ENCODE measurements at regions of chr9 and their contacts with region 1.

Region 1: GRCh38 chr9:131096269-131097125 is at the start of gene AIF1L:
- DNase-seq: peak; percentile 51
- H3K4me3 ChIP-seq: peak within 1 kb of the TSS in 2 of 3 experiments; percentile 46 to 61
- H3K27ac ChIP-seq: no peak within 1 kb of the TSS
- H3K4me1 ChIP-seq: peaks cover 5% of the 10 kb centered on the region
- H3K27me3 ChIP-seq: peaks cover 8 to 14% of the 10 kb centered on the region in 2 experiments
- CTCF ChIP-seq: peak in 1 of 2 donors; percentile 45
- POLR2A ChIP-seq: no peak
- total RNA-seq, gene AIF1L: 35.3 and 39.7 TPM in 2 replicates

Region 2: GRCh38 chr9:131111186-131111853 is 14.8 kb after region 1 on chr9:
- CTCF ChIA-PET with region 1: interaction called, 15 read pairs
- POLR2A ChIA-PET with region 1: no interaction called
- dilution Hi-C with region 1: no loop called
- intact Hi-C with region 1: no loop called
- DNase-seq: no peak
- H3K4me3 ChIP-seq: no peak overlapping the region
- H3K27ac ChIP-seq: no peak overlapping the region
- H3K4me1 ChIP-seq: peaks cover 10% of the 10 kb centered on the region
- H3K27me3 ChIP-seq: no peaks in the 10 kb centered on the region
- CTCF ChIP-seq: no peak
- POLR2A ChIP-seq: no peak

Region 3: DNA sequence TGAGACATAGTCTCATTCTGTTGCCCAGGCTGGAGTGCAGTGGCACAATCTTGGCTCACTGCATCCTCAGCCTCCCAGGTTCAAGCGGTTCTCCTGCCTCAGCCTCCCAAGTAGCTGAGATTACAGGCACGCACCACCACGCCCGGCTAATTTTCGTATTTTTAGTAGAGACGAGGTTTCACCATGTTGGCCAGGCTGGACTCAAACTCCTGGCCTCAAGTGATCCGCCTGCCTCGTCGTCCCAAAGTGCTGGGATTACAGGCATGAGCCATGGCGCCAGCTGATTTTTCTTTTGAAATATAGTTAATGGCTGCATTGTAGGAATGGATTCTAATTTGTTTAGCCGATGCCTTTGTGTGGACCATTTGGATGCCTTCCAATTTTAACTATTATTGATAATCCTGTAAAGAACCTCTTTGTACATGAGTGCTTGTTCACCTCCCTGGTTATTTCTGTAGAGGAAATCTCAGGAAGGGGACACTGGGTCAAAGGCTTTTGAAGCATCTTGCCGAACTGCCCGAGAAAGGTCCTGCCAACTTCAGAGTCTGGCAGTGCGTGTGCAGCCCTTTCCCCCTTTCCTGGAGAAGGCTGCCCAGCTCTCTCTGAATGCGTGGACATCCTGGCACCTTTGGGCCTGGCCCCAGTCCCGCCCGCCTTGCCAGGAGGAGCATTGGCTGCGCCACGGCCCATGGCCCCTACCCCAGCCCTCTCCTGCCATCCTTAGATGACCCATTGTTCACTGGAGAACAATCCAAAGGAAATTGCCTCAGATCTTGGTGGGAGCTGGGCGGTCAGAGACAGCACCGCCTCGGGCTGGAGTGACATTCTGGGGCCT is 20.0 kb after region 1 on chr9:
- CTCF ChIA-PET with region 1: interaction called, 15 read pairs
- POLR2A ChIA-PET with region 1: interaction called, 5 read pairs
- dilution Hi-C with region 1: no loop called
- intact Hi-C with region 1: loop called (anchors 1 kb)
- DNase-seq: no peak
- H3K4me3 ChIP-seq: peak overlapping the region in 1 of 3 experiments; percentile 22
- H3K27ac ChIP-seq: peak overlapping the region; percentile 96
- H3K4me1 ChIP-seq: peaks cover 27% of the 10 kb centered on the region
- H3K27me3 ChIP-seq: no peaks in the 10 kb centered on the region
- CTCF ChIP-seq: no peak
- POLR2A ChIP-seq: no peak

Region 4: GRCh38 chr9:131125128-131126058 is 28.9 kb after region 1 on chr9 and contains the start of gene NUP214:
- CTCF ChIA-PET with region 1: interaction called, 10 read pairs
- POLR2A ChIA-PET with region 1: no interaction called
- dilution Hi-C with region 1: no loop called
- intact Hi-C with region 1: no loop called
- DNase-seq: peak; percentile 99
- H3K4me3 ChIP-seq: peak within 1 kb of the TSS; percentile 37 to 83 (median 65)
- H3K27ac ChIP-seq: peak within 1 kb of the TSS; percentile 63
- H3K4me1 ChIP-seq: peaks cover 11% of the 10 kb centered on the region
- H3K27me3 ChIP-seq: no peaks in the 10 kb centered on the region
- CTCF ChIP-seq: no peak
- POLR2A ChIP-seq: peak; percentile 97
- total RNA-seq, gene NUP214: 58.1 and 65.9 TPM in 2 replicates

Region 5: DNA sequence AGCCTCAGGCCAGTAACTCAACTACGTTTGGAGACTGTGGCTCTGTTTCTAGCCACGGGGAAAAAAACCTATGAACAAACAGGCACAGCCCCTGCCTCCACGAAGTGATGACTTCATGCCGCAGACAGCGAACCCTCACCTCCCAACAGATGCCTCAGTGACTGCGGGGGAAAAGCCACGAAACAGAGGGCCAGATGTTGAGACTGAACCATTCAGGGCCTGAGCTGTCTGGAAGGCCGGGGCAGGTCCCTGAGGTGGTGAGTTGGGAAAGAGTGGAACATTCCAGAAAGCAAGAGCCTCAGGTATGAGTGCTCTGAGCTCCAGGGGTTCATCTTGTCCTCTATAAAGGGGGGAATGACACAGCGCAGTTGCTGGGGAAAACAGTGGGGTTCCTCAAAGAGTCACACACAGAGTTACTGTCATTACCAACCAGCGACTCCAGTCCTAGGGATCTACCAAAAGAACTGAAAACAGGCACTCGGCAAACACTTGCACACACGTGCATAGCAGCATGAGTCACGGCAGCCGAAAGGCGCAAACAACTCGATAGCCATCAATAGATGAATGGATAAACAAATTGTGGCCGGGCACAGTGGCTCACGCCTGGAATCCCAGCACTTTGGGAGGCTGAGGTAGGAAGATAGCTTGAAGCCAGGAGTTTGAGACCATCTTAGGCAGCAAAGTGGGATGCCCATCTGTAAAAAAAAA is 208.3 kb after region 1 on chr9:
- CTCF ChIA-PET with region 1: no interaction called
- POLR2A ChIA-PET with region 1: no interaction called
- dilution Hi-C with region 1: no loop called
- intact Hi-C with region 1: no loop called
- DNase-seq: no peak
- H3K4me3 ChIP-seq: no peak overlapping the region
- H3K27ac ChIP-seq: no peak overlapping the region
- H3K4me1 ChIP-seq: no peaks in the 10 kb centered on the region
- H3K27me3 ChIP-seq: no peaks in the 10 kb centered on the region
- CTCF ChIP-seq: no peak
- POLR2A ChIP-seq: no peak

Measured in endothelial cell of umbilical vein (primary cell).